PC-9 (cell line): ENCODE measurements at regions of chr10 and their contacts with region 1.

Region 1: GRCh38 chr10:103382769-103383168 is 13.5 kb downstream of the ATP5MK start:
- DNase-seq: no peak
- H3K4me3 ChIP-seq: no peak overlapping the region
- H3K27ac ChIP-seq: no peak overlapping the region
- H3K4me1 ChIP-seq: no peaks in the 10 kb centered on the region
- H3K27me3 ChIP-seq: no peaks in the 10 kb centered on the region
- CTCF ChIP-seq: no peak

Region 2: GRCh38 chr10:103353281-103353680 is 29.5 kb before region 1 on chr10:
- CTCF ChIA-PET with region 1: no interaction called
- POLR2A ChIA-PET with region 1: interaction called, 10 read pairs
- intact Hi-C with region 1: no loop called
- DNase-seq: no peak
- H3K4me3 ChIP-seq: no peak overlapping the region
- H3K27ac ChIP-seq: no peak overlapping the region
- H3K4me1 ChIP-seq: peaks cover 5% of the 10 kb centered on the region; the same call in 1 of the 2 replicates
- H3K27me3 ChIP-seq: no peaks in the 10 kb centered on the region
- CTCF ChIP-seq: no peak